Spleen (tissue), 13 donors: ENCODE measurements at regions of chr9 and their contacts with region 1.

Region 1: DNA sequence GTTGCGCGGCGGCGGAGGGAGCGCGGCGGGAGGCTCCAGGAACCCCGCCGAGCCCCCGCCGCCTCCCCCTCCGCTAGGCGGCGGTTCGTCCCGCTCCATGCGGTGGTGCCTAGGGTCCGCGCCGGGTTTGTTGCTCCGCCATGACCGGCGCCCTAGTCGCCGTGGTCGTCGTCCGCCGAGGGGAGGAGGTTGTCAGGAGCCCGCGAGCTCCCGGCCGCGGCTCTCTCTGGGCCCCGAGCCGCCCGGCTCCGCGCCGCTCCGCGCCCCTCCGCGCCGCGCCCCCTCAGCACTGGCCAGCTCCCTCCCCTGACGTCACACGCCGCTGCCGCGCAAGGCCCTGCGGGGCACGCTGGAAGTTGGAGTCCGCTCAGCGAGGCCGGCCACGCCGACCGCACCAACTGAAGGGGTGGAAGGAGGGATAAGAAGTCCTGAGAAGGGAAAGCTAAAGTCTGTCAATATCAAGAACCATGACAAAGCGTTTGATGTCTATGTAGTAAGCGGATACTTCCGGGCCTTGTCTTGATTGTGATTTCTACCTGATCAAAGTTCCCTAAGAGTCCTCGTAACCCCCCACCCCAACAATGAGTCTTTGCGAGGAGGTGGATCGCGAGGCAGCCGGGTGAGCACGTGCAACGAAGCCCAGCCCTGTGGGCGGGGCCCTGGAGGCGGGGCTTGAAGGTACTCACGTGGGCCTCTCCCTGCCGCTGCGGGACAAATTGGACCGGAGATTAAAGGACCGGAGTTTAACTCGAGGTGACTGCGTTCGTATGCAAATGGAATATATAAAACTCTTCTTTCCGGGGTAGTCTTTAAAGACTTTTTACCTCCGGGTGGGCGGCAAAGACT is at the start of gene NR6A1:
- DNase-seq: peak; percentile 99
- H3K4me3 ChIP-seq: peak within 1 kb of the TSS; percentile 88 to 100 (median 94)
- H3K27ac ChIP-seq: peak within 1 kb of the TSS in 7 of 8 donors; percentile 53 to 91 (median 73)
- H3K4me1 ChIP-seq: peaks cover 20 to 81% (median 49%) of the 10 kb centered on the region in 6 donors
- H3K27me3 ChIP-seq: peaks cover 0 to 76% (median 39%) of the 10 kb centered on the region in 7 donors
- CTCF ChIP-seq: peak in 7 of 11 experiments; percentile 11 to 52 (median 41)
- POLR2A ChIP-seq: peak in 1 of 3 donors; percentile 38
- total RNA-seq, gene NR6A1: 1.7 to 3.7 (median 2.5) TPM

Region 2: DNA sequence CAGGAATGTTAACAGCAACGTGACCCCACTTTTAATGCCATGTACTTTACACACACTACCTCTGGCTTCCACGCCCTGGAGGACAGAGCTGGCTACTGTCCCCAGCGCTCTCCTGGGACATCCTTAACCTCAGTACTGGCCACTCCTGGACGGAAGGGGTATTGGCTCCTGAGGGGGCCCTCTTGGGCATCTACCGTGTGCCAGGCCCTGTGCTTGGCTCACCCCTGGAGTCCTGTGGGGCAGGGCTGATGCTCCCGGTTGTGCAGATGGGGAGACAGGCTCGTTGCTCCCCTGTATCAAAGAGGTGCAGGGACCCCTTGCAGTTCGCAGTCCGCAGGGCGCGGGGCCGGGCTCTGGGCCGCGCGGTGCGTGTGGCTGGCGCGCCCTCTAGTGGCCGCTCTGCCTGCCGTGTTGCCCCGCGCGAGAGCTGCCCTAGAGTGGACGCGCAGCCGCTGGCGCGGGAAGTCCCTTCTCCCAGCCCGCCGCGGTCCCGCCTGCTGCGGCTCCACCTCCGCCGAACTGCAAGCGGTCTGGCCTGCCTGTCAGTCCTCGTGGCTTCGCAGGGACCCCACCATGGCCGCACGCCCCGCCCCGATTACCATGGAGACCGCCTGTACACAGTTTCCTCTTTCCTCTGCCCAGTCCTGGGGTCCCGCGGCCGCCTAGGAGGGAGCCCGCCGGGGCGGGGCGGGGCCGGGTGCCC is 81.7 kb after region 1 on chr9 and contains the start of gene WDR38:
- intact Hi-C with region 1: loop called (anchors 2 kb)
- DNase-seq: peak; percentile 95
- H3K4me3 ChIP-seq: peak within 1 kb of the TSS; percentile 20 to 70 (median 42)
- H3K27ac ChIP-seq: peak within 1 kb of the TSS in 6 of 8 donors; percentile 41 to 68 (median 50)
- H3K4me1 ChIP-seq: peaks cover 11 to 30% (median 16%) of the 10 kb centered on the region in 6 donors
- H3K27me3 ChIP-seq: no peaks in the 10 kb centered on the region
- CTCF ChIP-seq: peak; percentile 89 to 100 (median 98)
- POLR2A ChIP-seq: no peak
- total RNA-seq, gene WDR38: not detected

Region 3: GRCh38 chr9:125143375-125144090 is 372.3 kb after region 1 on chr9 and contains the start of gene SCAI:
- intact Hi-C with region 1: loop called (anchors 5 kb)
- DNase-seq: peak; percentile 99
- H3K4me3 ChIP-seq: peak within 1 kb of the TSS; percentile 56 to 91 (median 80)
- H3K27ac ChIP-seq: peak within 1 kb of the TSS in 7 of 8 donors; percentile 42 to 86 (median 77)
- H3K4me1 ChIP-seq: peaks cover 11 to 40% (median 17%) of the 10 kb centered on the region in 6 donors
- H3K27me3 ChIP-seq: no peaks in the 10 kb centered on the region
- CTCF ChIP-seq: peak; percentile 98 to 100 (median 99)
- POLR2A ChIP-seq: peak in 1 of 3 donors; percentile 66
- total RNA-seq, gene SCAI: 5.4 to 19.6 (median 8.3) TPM

Region 4: DNA sequence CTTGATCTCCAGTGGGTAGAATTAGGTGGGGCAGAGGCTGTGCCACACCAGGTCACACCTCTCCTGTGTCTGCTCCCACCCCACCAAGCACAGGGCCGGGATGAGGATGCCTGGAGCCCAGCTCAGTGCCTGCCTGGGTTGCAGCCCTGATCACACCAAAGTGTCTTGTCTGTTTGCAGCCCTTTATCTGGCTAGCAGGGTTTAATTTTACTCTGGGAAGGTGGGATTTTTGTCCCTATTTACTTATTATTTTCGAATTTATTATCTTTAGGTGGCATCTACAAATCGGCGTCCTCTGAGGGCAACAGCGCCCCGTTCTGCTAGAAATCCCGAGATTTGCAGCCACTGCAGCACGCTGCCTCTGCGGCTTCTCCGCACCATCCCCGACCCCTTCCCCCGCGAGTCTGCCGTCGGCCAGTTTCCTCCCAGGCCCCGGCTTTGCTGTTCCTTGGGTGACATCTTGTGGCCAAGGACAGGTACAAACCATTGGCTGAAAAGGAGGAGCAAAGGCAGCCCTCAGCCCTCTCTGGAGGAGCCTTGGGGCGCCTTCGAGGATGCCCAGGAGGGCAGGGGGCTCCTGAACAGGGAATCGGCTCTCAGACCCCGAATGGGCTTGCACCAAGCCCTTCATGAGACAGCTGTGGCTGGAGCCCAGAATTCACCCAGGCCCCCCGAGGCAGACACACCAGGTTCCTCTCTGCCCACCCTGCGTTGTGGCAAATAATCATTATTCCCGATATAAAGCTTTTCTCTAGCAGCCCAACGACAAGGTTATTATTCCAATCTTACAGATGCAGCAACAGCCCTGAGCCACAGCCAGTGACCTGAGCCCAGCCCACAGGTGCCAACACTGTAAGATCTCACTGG is 603.4 kb after region 1 on chr9:
- intact Hi-C with region 1: loop called (anchors 10 kb)
- DNase-seq: peak; percentile 89
- H3K4me3 ChIP-seq: peak overlapping the region in 4 of 8 donors; percentile 3 to 51 (median 26)
- H3K27ac ChIP-seq: no peak overlapping the region
- H3K4me1 ChIP-seq: peaks cover 0 to 14% (median 7%) of the 10 kb centered on the region in 6 donors
- H3K27me3 ChIP-seq: peaks cover 0 to 25% (median 0%) of the 10 kb centered on the region in 7 donors
- CTCF ChIP-seq: peak; percentile 43 to 85 (median 72)
- POLR2A ChIP-seq: no peak